Mammary epithelial cell (primary cell): ENCODE measurements at regions of chr18 and their contacts with region 1.

Region 1: DNA sequence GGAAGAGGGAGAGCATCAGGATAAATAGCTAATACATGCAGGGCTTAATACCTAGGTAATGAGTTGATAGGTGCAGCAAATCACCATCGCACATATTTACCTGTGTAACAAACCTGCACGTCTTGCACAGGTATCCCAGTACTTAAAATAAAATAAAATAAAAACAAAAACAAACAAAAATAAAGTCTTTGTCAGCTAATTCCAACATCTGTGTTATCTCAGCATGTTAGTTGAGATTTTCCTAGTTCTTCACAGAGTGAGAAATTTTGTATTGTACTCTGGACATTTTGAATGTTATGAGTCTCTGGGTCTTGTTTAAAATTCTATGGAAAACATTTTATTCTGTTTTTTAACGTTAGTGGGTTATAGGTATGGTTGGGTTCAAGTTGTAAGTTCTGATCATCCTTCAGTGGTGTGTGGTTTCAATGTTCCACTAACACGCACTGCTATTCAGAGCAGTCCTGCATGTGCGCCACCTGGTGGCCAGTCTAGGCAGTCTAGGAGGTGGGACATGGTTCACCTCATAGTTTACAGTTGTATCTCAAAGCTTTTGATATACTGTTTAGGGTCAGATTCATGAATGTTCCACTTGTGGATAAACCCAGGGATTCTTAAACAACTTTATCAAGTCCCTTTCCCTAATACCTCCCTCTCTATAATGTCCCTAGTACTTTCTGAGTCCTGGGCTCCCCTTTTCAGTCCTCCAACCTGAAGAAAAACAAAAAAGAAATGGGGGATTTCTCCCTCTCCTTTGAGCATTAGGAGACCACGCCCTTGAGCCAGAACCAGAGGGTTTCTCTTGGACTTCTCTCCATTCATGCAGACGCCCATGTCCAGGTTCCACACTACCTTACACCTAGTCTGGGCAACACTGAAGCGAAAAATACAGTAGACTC is 213.4 kb upstream of the GATA6 start:
- DNase-seq: peak; percentile 41
- H3K4me3 ChIP-seq: no peak overlapping the region
- H3K27ac ChIP-seq: no peak overlapping the region
- H3K4me1 ChIP-seq: no peaks in the 10 kb centered on the region
- H3K27me3 ChIP-seq: no peaks in the 10 kb centered on the region
- CTCF ChIP-seq: peak; percentile 94 to 97

Region 2: DNA sequence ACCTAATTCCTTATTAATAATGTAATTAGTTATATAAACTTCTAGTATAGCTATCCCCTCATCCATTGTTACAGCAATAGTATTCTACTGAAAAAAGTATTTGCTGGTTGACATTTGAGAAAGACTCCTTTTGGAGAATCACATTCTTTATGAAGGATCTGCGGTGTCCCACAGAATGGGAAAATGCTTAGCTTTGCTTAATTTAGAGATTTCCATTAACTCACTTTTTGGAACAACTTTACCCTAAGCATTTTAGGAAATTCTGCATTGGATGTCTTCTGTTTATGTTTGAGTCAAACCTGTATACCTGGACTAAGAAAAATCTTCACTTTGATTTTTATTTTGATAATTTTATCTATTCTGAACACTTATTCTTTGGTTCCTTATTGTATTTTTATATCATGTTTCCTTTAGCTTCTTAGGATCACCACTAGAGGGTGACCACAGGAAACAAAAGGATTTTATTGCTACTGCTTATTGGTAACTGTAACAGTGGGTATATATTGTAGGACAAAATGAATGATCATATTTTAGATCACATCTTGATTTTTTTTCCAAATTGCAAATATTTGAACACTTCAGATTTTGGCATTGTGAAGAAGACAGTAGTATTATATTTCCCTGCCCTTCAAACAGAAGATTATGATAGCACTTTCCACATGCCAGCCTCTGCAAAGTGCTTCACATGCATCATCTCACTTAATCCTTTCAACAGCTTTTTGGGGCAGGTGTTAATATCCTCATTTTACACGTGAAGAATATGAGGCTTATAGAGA is 135.8 kb before region 1 on chr18:
- CTCF ChIA-PET with region 1: no interaction called
- dilution Hi-C with region 1: no loop called
- in situ Hi-C with region 1: no loop called
- intact Hi-C with region 1: loop called (anchors 5 kb)
- DNase-seq: peak; percentile 4
- H3K4me3 ChIP-seq: no peak overlapping the region
- H3K27ac ChIP-seq: no peak overlapping the region
- H3K4me1 ChIP-seq: no peaks in the 10 kb centered on the region
- H3K27me3 ChIP-seq: no peaks in the 10 kb centered on the region
- CTCF ChIP-seq: peak; percentile 55 to 63

Region 3: DNA sequence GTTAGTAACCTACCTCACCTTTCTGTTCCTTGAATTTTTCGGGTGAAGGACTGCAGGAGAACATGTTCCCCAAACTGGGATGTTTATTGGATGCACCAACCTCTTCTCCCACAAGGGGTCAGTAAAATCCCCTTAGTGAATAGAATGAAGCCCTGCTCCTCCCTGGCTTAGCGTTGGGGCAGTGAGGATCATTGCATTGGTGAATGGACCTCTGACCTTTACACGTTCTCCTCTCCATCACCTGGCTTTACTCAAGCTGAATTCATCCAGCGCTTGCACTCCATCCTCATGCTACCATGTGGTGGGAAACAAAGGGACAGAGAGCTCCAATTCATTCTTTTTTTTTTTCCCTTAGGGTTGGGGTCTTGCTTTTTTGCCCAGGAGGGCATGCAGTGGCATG is 58.2 kb before region 1 on chr18:
- CTCF ChIA-PET with region 1: no interaction called
- dilution Hi-C with region 1: loop called (anchors 5 kb)
- in situ Hi-C with region 1: no loop called
- intact Hi-C with region 1: loop called (anchors 1 kb)
- DNase-seq: peak; percentile 39
- H3K4me3 ChIP-seq: no peak overlapping the region
- H3K27ac ChIP-seq: no peak overlapping the region
- H3K4me1 ChIP-seq: no peaks in the 10 kb centered on the region
- H3K27me3 ChIP-seq: no peaks in the 10 kb centered on the region
- CTCF ChIP-seq: peak; percentile 86 to 90

Region 4: DNA sequence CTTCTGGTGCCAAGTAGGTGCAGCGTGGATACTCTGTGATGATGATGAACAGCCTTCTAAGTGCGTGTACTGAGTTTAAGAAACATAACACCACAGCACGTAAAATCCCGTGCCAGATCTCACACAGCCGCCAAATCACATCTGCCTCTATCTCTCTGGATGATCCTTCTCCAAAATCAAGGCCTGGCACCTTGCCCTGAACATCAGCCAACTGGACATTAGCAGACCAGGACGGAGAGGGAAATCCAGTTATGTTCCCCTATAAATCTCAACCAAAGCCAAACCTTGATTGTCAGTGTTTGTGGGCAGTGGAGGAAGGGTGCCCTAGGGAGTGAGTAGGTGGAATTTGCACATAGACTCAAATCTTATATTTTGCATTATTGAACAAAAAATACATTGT is 51.1 kb before region 1 on chr18:
- CTCF ChIA-PET with region 1: no interaction called
- dilution Hi-C with region 1: loop called (anchors 5 kb)
- in situ Hi-C with region 1: no loop called
- intact Hi-C with region 1: no loop called
- DNase-seq: no peak
- H3K4me3 ChIP-seq: no peak overlapping the region
- H3K27ac ChIP-seq: no peak overlapping the region
- H3K4me1 ChIP-seq: no peaks in the 10 kb centered on the region
- H3K27me3 ChIP-seq: no peaks in the 10 kb centered on the region
- CTCF ChIP-seq: no peak

Region 5: GRCh38 chr18:21914739-21915319 is 41.2 kb before region 1 on chr18:
- CTCF ChIA-PET with region 1: no interaction called
- dilution Hi-C with region 1: no loop called
- in situ Hi-C with region 1: no loop called
- intact Hi-C with region 1: loop called (anchors 1 kb)
- DNase-seq: peak; percentile 25
- H3K4me3 ChIP-seq: no peak overlapping the region
- H3K27ac ChIP-seq: no peak overlapping the region
- H3K4me1 ChIP-seq: no peaks in the 10 kb centered on the region
- H3K27me3 ChIP-seq: peaks cover 7% of the 10 kb centered on the region
- CTCF ChIP-seq: peak; percentile 46 to 66

Region 6: GRCh38 chr18:22015156-22015555 is 59.2 kb after region 1 on chr18:
- CTCF ChIA-PET with region 1: no interaction called
- dilution Hi-C with region 1: no loop called
- in situ Hi-C with region 1: no loop called
- intact Hi-C with region 1: no loop called
- DNase-seq: peak; percentile 29
- H3K4me3 ChIP-seq: no peak overlapping the region
- H3K27ac ChIP-seq: no peak overlapping the region
- H3K4me1 ChIP-seq: no peaks in the 10 kb centered on the region
- H3K27me3 ChIP-seq: no peaks in the 10 kb centered on the region
- CTCF ChIP-seq: no peak